Sciatic nerve (tissue), 2 donors: ENCODE measurements at regions of chr12 and their contacts with region 1.

Region 1: DNA sequence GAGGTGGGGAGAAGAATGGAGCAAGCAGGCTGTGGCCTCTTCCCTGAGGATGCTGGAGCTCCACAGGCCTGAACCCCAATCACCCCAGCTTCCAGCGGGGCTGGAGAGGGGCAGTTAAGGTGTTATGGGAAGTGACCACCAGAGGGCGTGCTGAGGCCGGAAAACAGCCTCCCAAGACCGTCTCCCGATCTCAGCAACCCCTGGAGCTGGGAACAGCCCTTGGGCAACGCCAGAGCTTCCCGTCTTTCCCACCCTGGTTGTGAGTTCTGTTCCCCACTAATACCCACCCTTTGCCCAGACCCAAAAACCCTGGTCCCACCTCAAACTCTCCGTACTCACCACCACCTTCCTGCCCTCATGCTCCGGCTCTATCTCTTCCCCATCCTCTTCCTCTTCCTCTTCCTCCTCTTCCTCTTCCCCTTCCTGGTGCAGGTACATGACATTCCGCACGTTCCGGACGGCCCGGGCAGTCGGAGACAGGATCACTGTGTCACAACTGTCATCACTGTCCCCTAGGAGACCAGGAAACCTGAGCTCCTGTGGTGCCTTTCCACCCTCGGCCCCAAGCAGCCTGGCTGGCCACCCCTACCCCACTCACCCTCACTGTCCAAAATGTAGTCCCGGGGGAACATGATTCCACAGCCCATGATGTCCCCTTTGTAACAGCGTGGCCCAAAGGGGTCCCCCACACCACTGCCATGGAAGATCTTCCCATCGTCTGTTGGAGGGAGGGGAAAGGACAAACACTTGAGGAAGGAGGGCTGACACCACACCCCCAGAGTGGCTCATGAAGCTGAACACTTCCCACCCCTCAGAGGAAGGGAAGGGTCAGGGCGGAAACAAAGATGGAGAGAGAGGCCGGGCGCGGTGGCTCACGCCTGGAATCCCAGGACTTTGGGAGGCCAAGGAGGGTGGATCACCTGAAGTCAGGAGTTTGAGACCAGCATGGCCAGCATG is 12.9 kb downstream of the SPRYD3 start:
- DNase-seq: peak; percentile 94
- ATAC-seq: peak; percentile 52

Region 2: DNA sequence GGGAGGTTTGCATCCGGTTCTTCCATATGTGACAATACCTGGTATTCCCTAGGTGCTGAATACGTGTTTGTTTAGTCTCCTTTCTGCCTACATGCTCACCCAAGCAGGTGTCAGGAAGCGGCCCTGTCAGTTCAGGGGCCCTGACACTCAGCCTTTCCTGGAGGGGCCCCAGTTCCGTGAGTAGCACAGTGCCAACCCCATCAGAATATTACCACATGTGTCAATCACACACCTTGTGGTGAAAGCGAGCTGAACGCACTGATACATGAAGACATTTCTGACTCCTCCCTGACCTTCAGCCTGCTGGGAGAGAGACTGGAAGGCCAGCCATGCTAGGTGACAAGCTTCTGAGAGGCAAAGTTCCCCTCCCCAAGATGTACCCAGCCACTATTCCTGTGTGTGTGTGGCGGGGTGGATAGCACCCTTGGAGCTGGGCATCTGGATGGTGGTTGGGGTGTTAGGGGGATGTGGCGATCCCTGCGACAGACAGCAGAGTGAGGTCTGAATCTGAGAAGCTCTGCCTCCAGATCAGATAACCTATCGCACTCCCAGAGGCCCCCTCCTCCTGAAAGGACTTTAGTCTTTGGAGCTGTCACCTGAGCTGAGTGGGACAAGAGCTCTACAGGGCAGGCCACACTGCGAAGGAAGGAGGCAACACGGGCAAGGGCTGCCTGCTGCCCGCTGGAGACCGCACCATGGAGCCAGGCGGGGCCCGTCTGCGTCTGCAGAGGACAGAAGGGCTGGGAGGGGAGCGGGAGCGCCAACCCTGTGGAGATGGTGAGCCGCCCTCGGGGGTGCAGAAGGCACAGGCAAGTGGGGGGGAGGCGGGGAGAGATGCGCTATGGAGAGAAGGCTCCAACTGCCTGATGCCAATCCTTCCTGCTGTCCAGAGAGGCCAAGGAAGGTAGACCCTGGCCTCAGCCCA is 36.9 kb after region 1 on chr12 and contains the start of gene SOAT2:
- intact Hi-C with region 1: loop called (anchors 5 kb)
- DNase-seq: peak; percentile 59
- ATAC-seq: no peak
- total RNA-seq, gene SOAT2: 1.2 TPM

Region 3: GRCh38 chr12:53190108-53190729 is 124.0 kb after region 1 on chr12:
- intact Hi-C with region 1: loop called (anchors 10 kb)
- DNase-seq: no peak
- ATAC-seq: peak; percentile 87

Region 4: GRCh38 chr12:53508534-53509199 is 442.4 kb after region 1 on chr12:
- intact Hi-C with region 1: no loop called
- DNase-seq: peak; percentile 92
- ATAC-seq: peak; percentile 80